GM10248 (cell line): ENCODE measurements at regions of chr4 and their contacts with region 1.

Region 1: GRCh38 chr4:85084380-85085094 is 118.0 kb upstream of the WDFY3 start:
- DNase-seq: peak; percentile 18
- CTCF ChIP-seq: peak; percentile 31

Region 2: DNA sequence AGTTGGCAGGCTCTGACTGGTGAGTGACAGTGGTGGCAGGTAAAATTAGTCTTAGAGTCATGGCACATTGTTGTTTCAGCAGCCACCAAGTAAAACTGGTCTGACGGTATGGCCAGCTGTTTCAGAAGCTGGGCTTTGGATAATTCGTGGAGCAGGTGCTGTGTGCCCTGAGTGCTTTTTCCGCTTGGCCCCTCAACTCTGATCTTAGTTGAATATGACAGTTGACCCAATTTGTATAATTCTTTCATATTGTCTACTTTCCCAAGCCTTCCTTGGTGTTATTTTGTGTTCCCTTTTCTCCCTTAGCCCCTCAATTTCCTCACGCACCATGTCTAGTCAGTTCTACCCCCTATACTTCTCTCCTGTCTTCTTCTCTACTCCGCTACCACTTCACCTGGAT is 469.6 kb before region 1 on chr4:
- CTCF ChIA-PET with region 1: no interaction called
- POLR2A ChIA-PET with region 1: no interaction called
- DNase-seq: no peak
- CTCF ChIP-seq: no peak

Region 3: DNA sequence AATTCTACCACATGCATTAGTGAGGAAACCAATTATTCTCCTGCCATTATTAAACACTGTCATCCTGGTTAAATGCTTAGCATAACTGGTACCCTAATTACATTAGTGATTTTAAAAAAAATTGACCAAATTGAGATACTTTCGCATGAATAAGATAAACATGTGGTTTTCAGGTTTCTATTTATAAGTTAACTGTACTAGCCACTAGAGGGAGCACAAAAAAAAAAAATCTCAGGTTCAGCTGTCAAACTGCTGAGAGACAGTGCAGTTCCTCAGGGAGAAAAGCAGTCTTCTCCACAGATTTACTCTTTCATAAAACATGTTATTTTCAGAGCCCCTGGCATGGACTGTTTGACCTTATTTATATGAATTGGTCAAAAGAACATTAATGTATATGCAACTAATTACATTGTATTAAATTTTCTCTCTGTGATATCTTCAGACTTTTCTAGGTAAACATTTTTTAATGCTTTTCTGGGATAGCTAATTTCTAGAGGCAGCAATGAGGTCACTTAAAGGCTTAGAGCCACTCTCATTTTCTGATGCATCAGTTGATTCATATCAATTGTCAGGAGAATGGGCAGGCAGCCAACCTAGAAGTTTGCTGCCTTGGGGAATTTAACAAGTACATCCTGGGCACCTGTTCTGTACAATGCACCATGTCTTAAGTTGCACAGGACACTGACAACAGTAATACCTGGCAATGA is 334.1 kb before region 1 on chr4:
- CTCF ChIA-PET with region 1: no interaction called
- POLR2A ChIA-PET with region 1: no interaction called
- DNase-seq: peak; percentile 26
- CTCF ChIP-seq: peak; percentile 42

Region 4: DNA sequence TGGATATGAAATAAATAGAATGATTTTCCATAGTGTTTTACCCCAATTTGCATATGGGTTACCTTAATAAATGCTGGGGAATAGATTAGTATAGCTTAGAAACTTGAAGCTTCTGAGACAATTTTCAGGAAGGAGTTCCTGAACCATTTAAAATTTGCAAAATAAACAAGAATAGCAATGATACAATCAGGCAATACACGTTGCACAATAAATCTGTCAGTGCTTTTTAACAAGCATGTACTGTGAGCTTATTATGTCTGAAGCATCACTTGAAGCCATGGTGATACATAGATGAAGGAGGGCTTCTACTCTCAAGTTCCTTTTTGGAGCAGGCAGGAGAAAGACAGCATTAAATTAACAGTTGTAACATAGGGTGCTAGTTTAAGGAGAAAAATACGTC is 33.8 kb before region 1 on chr4:
- CTCF ChIA-PET with region 1: interaction called, 12 read pairs
- POLR2A ChIA-PET with region 1: no interaction called
- DNase-seq: no peak
- CTCF ChIP-seq: no peak

Region 5: DNA sequence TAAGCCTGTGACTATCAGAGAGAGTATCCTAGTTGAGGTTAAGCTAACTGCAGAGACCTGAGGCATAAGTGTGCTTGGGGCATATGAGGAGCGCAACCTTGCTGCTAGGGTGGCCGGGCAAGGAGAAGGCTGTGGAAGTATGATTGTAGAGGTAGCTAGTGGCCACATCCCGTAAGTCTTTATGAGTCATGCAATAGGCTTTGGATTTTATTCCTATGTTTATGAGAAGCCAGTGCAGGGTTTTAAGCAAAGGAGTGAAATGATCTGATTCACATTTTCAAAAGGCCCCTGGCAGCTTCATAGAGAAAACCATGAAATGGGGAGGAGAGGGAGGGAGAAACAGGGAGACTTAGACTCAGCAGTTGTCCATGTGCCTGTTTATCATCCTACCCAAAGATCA is 26.0 kb before region 1 on chr4:
- CTCF ChIA-PET with region 1: interaction called, 12 read pairs
- POLR2A ChIA-PET with region 1: no interaction called
- DNase-seq: no peak
- CTCF ChIP-seq: no peak

Region 6: GRCh38 chr4:85107553-85107952 is 23.0 kb after region 1 on chr4:
- CTCF ChIA-PET with region 1: interaction called, 13 read pairs
- POLR2A ChIA-PET with region 1: no interaction called
- DNase-seq: no peak
- CTCF ChIP-seq: no peak

Region 7: DNA sequence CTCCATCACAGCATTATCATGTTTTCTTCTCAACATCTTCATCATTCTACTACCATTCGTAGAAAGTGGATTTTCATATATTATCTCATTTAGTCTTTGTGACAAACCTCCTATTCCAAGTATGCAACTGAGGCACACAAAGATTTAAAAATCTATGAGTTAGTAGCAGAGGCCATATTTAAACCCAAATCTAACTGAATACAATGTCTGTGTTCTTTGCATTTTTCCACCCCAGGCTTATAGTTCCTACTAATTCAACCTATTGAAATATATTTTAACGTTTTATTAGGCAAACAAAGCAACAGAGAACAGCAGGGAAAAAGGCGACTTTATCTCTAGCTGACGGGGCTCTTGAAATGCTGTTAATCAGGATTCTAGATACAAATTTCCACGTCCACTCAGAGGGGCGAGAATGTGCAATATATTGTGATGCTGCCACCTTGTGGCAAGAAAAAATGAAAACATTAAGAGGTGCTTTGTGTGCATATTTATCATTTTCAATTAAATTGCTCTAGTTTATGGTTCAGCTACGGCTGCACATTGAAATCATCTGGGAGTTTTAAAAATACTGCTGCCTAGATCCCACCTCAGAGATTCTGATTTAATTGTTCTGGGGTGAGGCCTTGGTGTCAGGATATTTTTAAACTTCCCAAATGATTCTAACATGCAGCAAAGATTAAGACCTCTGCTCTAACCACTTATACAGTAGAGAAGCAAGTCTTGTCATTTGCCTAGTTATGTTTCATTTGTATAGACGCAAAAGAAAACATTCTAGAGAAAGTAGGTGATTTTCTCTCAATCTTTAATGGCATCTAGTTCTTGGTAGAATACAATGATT is 959.4 kb after region 1 on chr4:
- CTCF ChIA-PET with region 1: interaction called, 21 read pairs
- POLR2A ChIA-PET with region 1: no interaction called
- DNase-seq: peak; percentile 8
- CTCF ChIP-seq: peak; percentile 69